Heart left ventricle (tissue), 16 donors: ENCODE measurements at regions of chr3 and their contacts with region 1.

Region 1: GRCh38 chr3:62114763-62115162 is 258.6 kb downstream of the FEZF2 start:
- DNase-seq: no peak
- ATAC-seq: no peak
- H3K4me3 ChIP-seq: no peak overlapping the region
- H3K27ac ChIP-seq: no peak overlapping the region
- H3K4me1 ChIP-seq: peaks cover 0 to 17% (median under 1%) of the 10 kb centered on the region in 12 donors
- H3K27me3 ChIP-seq: no peaks in the 10 kb centered on the region
- CTCF ChIP-seq: no peak
- POLR2A ChIP-seq: no peak

Region 2: GRCh38 chr3:61414456-61414855 is 700.3 kb before region 1 on chr3:
- intact Hi-C with region 1: no loop called
- DNase-seq: no peak
- ATAC-seq: no peak
- H3K4me3 ChIP-seq: no peak overlapping the region
- H3K27ac ChIP-seq: no peak overlapping the region
- H3K4me1 ChIP-seq: peaks cover 0 to 8% (median 0%) of the 10 kb centered on the region in 12 donors
- H3K27me3 ChIP-seq: no peaks in the 10 kb centered on the region
- CTCF ChIP-seq: no peak
- POLR2A ChIP-seq: no peak

Region 3: DNA sequence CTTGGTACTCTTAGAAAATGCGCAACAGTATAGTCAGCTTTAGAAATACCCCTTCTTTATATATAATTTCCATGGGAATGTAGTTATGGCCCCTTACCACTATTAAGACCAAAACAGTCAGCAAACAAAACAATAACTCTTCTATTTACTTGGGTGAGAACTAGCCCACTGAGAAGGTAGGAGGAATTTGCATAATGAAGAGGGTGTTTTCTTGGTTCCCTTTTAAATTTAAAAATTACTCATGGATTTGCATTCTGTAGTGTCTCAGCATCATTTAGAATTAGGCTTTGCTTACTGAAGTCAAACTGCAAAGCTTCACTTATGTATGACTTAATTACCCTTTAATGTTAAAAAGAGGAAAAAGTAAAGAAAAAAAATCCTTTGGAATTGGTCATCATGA is 202.6 kb before region 1 on chr3:
- intact Hi-C with region 1: no loop called
- DNase-seq: no peak
- ATAC-seq: no peak
- H3K4me3 ChIP-seq: no peak overlapping the region
- H3K27ac ChIP-seq: no peak overlapping the region
- H3K4me1 ChIP-seq: peaks cover 0 to 47% (median 24%) of the 10 kb centered on the region in 12 donors
- H3K27me3 ChIP-seq: no peaks in the 10 kb centered on the region
- CTCF ChIP-seq: no peak
- POLR2A ChIP-seq: no peak

Region 4: GRCh38 chr3:62073038-62073437 is 41.7 kb before region 1 on chr3:
- intact Hi-C with region 1: no loop called
- DNase-seq: no peak
- ATAC-seq: no peak
- H3K4me3 ChIP-seq: no peak overlapping the region
- H3K27ac ChIP-seq: no peak overlapping the region
- H3K4me1 ChIP-seq: peaks cover 0 to 31% (median 17%) of the 10 kb centered on the region in 12 donors
- H3K27me3 ChIP-seq: no peaks in the 10 kb centered on the region
- CTCF ChIP-seq: no peak
- POLR2A ChIP-seq: no peak

Region 5: DNA sequence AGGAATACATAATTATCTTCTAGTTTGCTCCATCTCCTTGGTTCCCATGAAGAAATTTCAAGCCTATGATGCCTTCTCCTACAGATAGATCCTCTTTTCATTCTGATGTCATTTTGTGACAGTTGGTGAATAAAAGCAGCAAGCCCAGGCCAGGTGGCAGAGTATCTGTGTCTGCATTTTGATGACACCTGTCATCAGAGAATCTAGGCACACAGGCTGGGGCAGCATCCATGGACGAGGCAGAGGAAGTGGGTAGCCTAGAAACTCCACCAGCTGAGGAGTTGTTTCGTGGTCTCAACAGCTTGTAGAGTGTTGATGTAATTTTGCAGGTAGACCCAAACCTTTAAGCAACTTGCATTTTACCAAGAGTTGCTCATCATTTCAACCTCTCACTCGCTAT is 11.2 kb before region 1 on chr3:
- intact Hi-C with region 1: loop called in 1 of 10 experiments (anchors 1 kb)
- DNase-seq: no peak
- ATAC-seq: no peak
- H3K4me3 ChIP-seq: no peak overlapping the region
- H3K27ac ChIP-seq: no peak overlapping the region
- H3K4me1 ChIP-seq: peaks cover 0 to 29% (median 16%) of the 10 kb centered on the region in 12 donors
- H3K27me3 ChIP-seq: no peaks in the 10 kb centered on the region
- CTCF ChIP-seq: no peak
- POLR2A ChIP-seq: no peak